MCF 10A (cell line): ENCODE measurements at regions of chr20 and their contacts with region 1.

Region 1: GRCh38 chr20:18287915-18288748 is at the start of gene ZNF133:
- DNase-seq: peak; percentile 94
- H3K4me3 Mint-ChIP-seq: peak within 1 kb of the TSS; percentile 100
- H3K27ac Mint-ChIP-seq: peak within 1 kb of the TSS; percentile 98
- H3K4me1 Mint-ChIP-seq: peaks cover 35% of the 10 kb centered on the region
- H3K27me3 Mint-ChIP-seq: no peaks in the 10 kb centered on the region
- CTCF ChIP-seq: no peak
- total RNA-seq, gene ZNF133: 25.3 and 30.4 TPM in 2 replicates

Region 2: GRCh38 chr20:17968366-17969279 is 319.5 kb before region 1 on chr20 and contains the starts of genes MGME1 and SNX5:
- CTCF ChIA-PET with region 1: interaction called, 4 read pairs
- POLR2A ChIA-PET with region 1: interaction called, 59 read pairs
- intact Hi-C with region 1: no loop called
- DNase-seq: peak; percentile 99
- H3K4me3 Mint-ChIP-seq: peak within 1 kb of the TSS; percentile 95
- H3K27ac Mint-ChIP-seq: peak within 1 kb of the TSS; percentile 98
- H3K4me1 Mint-ChIP-seq: peaks cover 39% of the 10 kb centered on the region
- H3K27me3 Mint-ChIP-seq: no peaks in the 10 kb centered on the region
- CTCF ChIP-seq: no peak
- total RNA-seq, gene MGME1: 18.0 and 24.0 TPM in 2 replicates
- total RNA-seq, gene SNX5: 108 and 170 TPM in 2 replicates

Region 3: DNA sequence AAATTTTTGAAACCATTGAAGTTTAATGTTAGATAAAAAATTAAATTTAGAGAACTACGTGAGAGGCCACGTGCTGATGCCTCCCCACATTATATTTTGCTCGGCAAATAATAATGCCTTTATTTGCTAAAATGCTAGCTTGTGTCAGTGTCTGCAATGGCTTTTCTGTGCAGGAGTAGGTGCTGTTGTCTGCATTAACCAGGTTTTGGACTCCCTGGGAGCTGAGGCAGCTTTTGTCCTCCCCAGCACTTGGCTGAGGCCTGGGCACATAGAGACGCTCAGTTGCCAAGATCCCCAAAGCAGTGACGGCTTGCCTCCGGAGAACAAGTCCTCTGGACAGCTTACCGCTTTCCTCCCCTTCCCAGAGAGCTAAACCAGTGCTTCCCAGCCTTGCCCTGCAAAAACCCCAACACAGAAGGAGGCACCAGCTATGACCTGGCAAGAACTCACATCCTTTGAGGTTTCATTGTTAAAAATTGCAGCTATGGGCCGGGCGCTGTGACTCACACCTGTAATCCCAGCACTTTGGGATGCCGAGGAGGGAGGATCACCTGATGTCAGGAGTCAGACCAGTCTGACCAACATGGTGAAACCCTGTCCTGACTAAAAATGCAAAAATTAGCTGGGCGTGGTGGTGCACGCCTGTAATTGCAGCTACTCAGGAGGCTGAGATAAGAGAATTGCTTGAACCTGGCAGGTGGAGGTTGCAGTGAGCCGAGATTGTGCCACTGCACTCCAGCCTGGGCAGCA is 90.6 kb before region 1 on chr20:
- CTCF ChIA-PET with region 1: interaction called, 9 read pairs
- POLR2A ChIA-PET with region 1: interaction called, 36 read pairs
- intact Hi-C with region 1: no loop called
- DNase-seq: peak; percentile 87
- H3K4me3 Mint-ChIP-seq: no peak overlapping the region
- H3K27ac Mint-ChIP-seq: peak overlapping the region; percentile 89
- H3K4me1 Mint-ChIP-seq: no peaks in the 10 kb centered on the region
- H3K27me3 Mint-ChIP-seq: no peaks in the 10 kb centered on the region
- CTCF ChIP-seq: peak; percentile 18

Region 4: DNA sequence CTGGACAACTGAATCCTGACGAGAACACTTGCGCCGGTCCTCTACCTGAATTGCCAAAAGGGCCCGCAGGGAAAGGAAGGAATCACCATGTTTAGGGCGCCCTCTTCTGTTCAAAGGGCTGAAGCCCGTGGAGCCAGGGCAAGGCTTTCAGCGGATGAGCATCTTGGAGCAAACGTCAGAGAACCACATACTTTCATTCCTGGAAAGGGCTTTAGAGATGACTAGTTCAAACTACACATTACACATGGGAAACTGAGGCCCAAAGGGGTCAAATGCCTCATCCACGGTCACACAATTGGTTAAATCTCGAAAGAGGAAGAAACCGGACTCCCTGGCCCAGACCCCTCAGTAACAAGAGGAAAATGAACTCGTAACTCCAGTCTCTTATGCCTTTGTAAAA is 11.3 kb before region 1 on chr20:
- CTCF ChIA-PET with region 1: interaction called, 32 read pairs
- POLR2A ChIA-PET with region 1: interaction called, 17 read pairs
- intact Hi-C with region 1: no loop called
- DNase-seq: peak; percentile 85
- H3K4me3 Mint-ChIP-seq: no peak overlapping the region
- H3K27ac Mint-ChIP-seq: no peak overlapping the region
- H3K4me1 Mint-ChIP-seq: peaks cover 19% of the 10 kb centered on the region
- H3K27me3 Mint-ChIP-seq: peaks cover 12% of the 10 kb centered on the region
- CTCF ChIP-seq: peak; percentile 77

Region 5: GRCh38 chr20:18466894-18467730 is 179.0 kb after region 1 on chr20 and contains the starts of genes DZANK1 and POLR3F:
- CTCF ChIA-PET with region 1: no interaction called
- POLR2A ChIA-PET with region 1: interaction called, 18 read pairs
- intact Hi-C with region 1: no loop called
- DNase-seq: peak; percentile 96
- H3K4me3 Mint-ChIP-seq: peak within 1 kb of the TSS; percentile 98
- H3K27ac Mint-ChIP-seq: peak within 1 kb of the TSS; percentile 99
- H3K4me1 Mint-ChIP-seq: no peaks in the 10 kb centered on the region
- H3K27me3 Mint-ChIP-seq: no peaks in the 10 kb centered on the region
- CTCF ChIP-seq: no peak
- total RNA-seq, gene DZANK1: 2.5 and 3.0 TPM in 2 replicates
- total RNA-seq, gene POLR3F: 11.2 and 15.1 TPM in 2 replicates